ENCODE measurements at regions of chr2 and their contacts with region 1.

Region 1: DNA sequence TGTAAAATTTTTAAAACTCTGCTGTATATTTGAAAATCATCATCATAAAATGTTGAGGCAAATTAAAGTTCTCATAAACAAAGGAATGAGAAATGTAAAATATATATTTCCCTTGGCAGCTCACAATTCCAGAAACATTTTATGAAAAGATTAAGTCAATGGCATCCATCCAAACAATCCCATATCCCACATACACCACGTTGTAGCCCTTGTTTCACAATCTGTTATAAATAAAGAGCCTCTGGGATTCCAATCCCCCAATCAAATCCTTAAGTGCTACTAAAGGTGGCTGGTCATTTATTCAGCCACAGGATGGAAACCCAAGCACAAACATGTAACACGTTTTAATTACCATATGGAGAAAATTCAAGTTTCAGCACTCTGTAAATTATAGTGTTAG is 51.7 kb downstream of the GFPT1 start:
- H3K4me3 Mint-ChIP-seq: no peak overlapping the region
- H3K27ac Mint-ChIP-seq: no peak overlapping the region
- H3K4me1 Mint-ChIP-seq: no peaks in the 10 kb centered on the region
- H3K27me3 Mint-ChIP-seq: no peaks in the 10 kb centered on the region

Region 2: GRCh38 chr2:70226781-70227180 is 891.5 kb after region 1 on chr2:
- intact Hi-C with region 1: loop called (anchors 10 kb)
- H3K4me3 Mint-ChIP-seq: no peak overlapping the region
- H3K27ac Mint-ChIP-seq: no peak overlapping the region
- H3K4me1 Mint-ChIP-seq: no peaks in the 10 kb centered on the region
- H3K27me3 Mint-ChIP-seq: no peaks in the 10 kb centered on the region

Measured in dendritic cell treated with granulocyte-macrophage colony-stimulating factor and Interleukin-4, amounts not matched to agents 40 ng/mL and 50 ng/mL, for 4 days (primary cell).